Caco-2 (cell line): ENCODE measurements at regions of chr15 and their contacts with region 1.

Region 1: DNA sequence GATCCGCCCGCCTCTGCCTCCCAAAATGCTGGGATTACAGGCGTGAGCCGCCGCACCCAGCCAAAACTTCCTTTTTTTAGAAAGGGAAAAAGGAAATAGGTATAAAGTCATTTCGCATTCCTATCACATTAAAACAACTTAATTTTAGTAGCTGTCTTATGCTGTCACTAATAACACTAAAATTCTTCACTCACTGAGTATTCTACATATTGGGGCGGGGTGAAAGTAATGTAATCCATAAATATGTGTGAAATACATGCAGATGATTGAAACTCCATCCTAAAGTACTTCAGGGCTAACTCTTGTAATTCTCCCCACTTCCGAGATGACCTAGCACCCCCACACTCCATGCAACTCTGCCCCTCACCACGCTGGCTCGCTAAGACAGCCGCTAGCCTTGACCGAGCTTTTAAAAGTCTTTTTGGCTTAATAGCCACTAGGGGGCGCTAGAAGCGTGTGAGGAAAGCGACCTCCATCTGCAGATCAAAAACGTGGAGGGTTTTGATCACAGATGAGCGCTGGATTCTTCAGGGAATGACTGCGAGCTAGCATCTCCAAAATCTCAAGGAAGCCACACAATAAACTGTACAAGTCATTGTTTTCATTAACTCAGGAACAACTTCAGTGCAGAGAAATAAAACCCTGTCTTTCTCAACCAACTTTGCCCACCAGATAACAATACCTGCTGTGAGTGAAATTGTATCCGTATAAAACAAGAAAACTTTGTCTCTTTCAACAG is 129.3 kb upstream of the IGF1R start:
- DNase-seq: peak; percentile 55 to 70
- H3K4me3 ChIP-seq: no peak overlapping the region
- H3K4me3 Mint-ChIP-seq: no peak overlapping the region
- H3K27ac Mint-ChIP-seq: no peak overlapping the region
- H3K4me1 ChIP-seq: no peaks in the 10 kb centered on the region
- H3K4me1 Mint-ChIP-seq: peaks cover under 1% of the 10 kb centered on the region
- H3K27me3 ChIP-seq: no peaks in the 10 kb centered on the region
- H3K27me3 Mint-ChIP-seq: peaks cover 5% of the 10 kb centered on the region
- CTCF ChIP-seq: peak; percentile 78

Region 2: DNA sequence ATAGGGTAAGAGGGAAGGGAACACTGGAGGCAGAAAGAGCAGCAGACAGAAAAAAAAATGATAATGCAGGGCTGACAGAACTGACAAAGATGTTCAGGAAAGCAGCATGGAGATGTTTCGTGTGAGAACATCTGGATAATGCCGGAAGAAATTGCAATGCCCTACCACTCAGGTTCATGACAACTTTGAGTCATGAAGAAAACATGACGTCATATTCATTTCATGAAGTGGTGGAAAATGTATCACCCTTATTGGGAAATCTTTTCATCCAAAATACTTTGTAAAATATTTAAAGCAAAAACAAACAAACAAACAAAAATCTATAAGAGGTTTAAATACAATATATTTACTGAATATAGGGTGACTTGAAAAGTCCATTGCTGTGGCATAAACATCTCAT is 176.1 kb before region 1 on chr15:
- CTCF ChIA-PET with region 1: no interaction called
- POLR2A ChIA-PET with region 1: no interaction called
- intact Hi-C with region 1: no loop called
- DNase-seq: no peak
- H3K4me3 ChIP-seq: no peak overlapping the region
- H3K4me3 Mint-ChIP-seq: no peak overlapping the region
- H3K27ac Mint-ChIP-seq: no peak overlapping the region
- H3K4me1 ChIP-seq: no peaks in the 10 kb centered on the region
- H3K4me1 Mint-ChIP-seq: no peaks in the 10 kb centered on the region
- H3K27me3 ChIP-seq: no peaks in the 10 kb centered on the region
- H3K27me3 Mint-ChIP-seq: peaks cover 5% of the 10 kb centered on the region
- CTCF ChIP-seq: no peak

Region 3: DNA sequence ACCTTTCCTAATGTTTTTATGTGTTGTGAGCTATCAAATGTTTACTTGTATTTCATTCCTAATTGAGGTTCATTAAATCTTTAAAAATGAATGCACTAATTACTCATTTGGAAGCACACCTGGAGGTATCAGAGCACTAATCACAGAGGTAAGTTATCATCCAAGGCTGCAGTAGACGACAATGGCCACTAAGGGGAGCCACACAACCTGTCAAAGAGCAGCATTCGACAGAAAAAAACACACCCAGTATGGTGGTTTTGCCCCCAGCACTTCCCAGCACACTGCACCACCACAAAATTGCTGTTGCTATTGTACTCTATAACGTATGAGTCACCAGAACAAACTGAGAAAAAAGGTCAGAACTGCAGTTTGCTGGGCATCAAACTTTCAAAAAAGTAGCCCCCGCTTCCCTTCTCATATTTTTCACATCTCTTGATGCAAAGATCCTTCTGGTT is 76.6 kb before region 1 on chr15:
- CTCF ChIA-PET with region 1: no interaction called
- POLR2A ChIA-PET with region 1: no interaction called
- intact Hi-C with region 1: loop called (anchors 2 kb)
- DNase-seq: peak; percentile 69 to 70
- H3K4me3 ChIP-seq: no peak overlapping the region
- H3K4me3 Mint-ChIP-seq: no peak overlapping the region
- H3K27ac Mint-ChIP-seq: no peak overlapping the region
- H3K4me1 ChIP-seq: no peaks in the 10 kb centered on the region
- H3K4me1 Mint-ChIP-seq: no peaks in the 10 kb centered on the region
- H3K27me3 ChIP-seq: no peaks in the 10 kb centered on the region; the same call in 1 of the 2 replicates
- H3K27me3 Mint-ChIP-seq: peaks cover 19% of the 10 kb centered on the region
- CTCF ChIP-seq: peak; percentile 74 to 78

Region 4: DNA sequence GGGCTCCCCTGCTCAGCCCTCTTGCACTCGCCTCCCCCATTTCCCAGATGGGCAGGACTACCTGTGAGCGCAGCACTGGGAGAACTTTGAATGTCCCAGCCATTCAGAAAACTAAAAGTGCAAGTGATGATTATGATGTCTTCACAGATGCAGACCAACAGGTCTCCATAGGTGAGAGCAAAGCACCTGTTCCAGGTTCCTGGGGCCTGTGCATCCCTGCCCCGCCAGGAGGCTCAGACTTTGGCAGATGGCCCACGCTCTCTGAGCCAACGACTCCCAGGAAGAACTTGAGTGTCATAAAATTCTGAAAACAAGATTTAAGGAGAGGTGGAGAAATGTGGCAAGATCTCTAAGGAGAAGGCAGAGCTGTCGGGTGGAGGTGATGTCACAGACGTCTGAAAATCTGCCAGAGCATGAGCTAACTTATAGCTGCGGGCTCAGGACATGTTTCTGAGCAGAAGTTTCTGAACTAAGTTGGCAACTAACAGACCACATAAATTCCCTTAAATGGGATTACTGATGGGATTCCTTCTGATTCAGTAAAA is 18.6 kb after region 1 on chr15:
- CTCF ChIA-PET with region 1: no interaction called
- POLR2A ChIA-PET with region 1: no interaction called
- intact Hi-C with region 1: no loop called
- DNase-seq: no peak
- H3K4me3 ChIP-seq: no peak overlapping the region
- H3K4me3 Mint-ChIP-seq: no peak overlapping the region
- H3K27ac Mint-ChIP-seq: no peak overlapping the region
- H3K4me1 ChIP-seq: no peaks in the 10 kb centered on the region
- H3K4me1 Mint-ChIP-seq: no peaks in the 10 kb centered on the region
- H3K27me3 ChIP-seq: no peaks in the 10 kb centered on the region; the same call in none of the 2 replicates
- H3K27me3 Mint-ChIP-seq: peaks cover 34% of the 10 kb centered on the region
- CTCF ChIP-seq: no peak

Region 5: GRCh38 chr15:98568382-98569017 is 49.5 kb after region 1 on chr15:
- CTCF ChIA-PET with region 1: no interaction called
- POLR2A ChIA-PET with region 1: no interaction called
- intact Hi-C with region 1: loop called (anchors 5 kb)
- DNase-seq: no peak
- H3K4me3 ChIP-seq: no peak overlapping the region
- H3K4me3 Mint-ChIP-seq: no peak overlapping the region
- H3K27ac Mint-ChIP-seq: no peak overlapping the region
- H3K4me1 ChIP-seq: no peaks in the 10 kb centered on the region
- H3K4me1 Mint-ChIP-seq: no peaks in the 10 kb centered on the region
- H3K27me3 ChIP-seq: no peaks in the 10 kb centered on the region
- H3K27me3 Mint-ChIP-seq: peaks cover 16% of the 10 kb centered on the region
- CTCF ChIP-seq: peak; percentile 50 to 80

Region 6: GRCh38 chr15:98635848-98636247 is 116.9 kb after region 1 on chr15:
- CTCF ChIA-PET with region 1: no interaction called
- POLR2A ChIA-PET with region 1: no interaction called
- intact Hi-C with region 1: no loop called
- DNase-seq: no peak
- H3K4me3 ChIP-seq: no peak overlapping the region
- H3K4me3 Mint-ChIP-seq: no peak overlapping the region
- H3K27ac Mint-ChIP-seq: no peak overlapping the region
- H3K4me1 ChIP-seq: no peaks in the 10 kb centered on the region
- H3K4me1 Mint-ChIP-seq: no peaks in the 10 kb centered on the region
- H3K27me3 ChIP-seq: no peaks in the 10 kb centered on the region
- H3K27me3 Mint-ChIP-seq: peaks cover 20% of the 10 kb centered on the region
- CTCF ChIP-seq: no peak

Region 7: DNA sequence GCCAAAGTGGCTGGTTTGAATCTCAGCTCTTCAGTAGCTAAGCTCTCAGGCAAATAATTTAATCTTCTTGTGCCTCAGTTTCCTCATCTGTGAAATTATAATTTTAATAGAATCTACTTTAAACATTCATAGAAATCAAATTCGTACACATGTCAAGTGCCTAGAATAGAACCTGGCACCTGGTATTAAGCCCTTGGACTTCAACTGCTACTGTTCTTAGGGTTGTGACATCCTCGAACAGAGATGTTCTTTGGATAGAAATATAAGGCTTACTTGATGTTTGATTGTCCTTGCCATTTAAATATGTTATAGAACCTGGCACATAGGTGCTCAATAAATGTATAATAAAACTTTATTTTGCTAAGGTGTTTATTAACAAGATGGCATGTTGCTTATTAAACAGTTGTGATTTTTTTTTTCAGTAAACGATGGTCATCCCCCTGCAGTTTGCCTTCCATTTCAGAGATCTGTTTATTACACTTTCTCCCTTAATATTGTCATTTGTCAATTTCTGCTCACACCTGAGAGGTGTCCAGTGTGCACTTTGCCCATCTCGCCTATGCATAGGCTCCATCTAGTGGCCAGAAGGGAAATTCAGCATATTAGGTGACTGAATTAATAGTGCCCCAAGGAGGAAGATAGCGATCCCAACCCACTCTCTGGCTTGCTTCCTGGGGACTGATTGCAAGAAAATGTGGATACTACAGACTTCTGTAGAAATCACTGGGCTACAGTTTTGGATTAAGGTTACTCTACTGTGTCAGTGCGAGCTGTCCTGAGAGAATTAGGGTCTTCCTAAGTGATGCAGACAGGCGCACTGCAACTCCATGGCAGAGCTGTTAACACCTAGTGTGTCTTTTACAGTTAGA is 140.1 kb after region 1 on chr15:
- CTCF ChIA-PET with region 1: interaction called, 3 read pairs
- POLR2A ChIA-PET with region 1: no interaction called
- intact Hi-C with region 1: loop called (anchors 1 kb)
- DNase-seq: peak in 1 of 2 experiments; percentile 63
- H3K4me3 ChIP-seq: no peak overlapping the region
- H3K4me3 Mint-ChIP-seq: no peak overlapping the region
- H3K27ac Mint-ChIP-seq: no peak overlapping the region
- H3K4me1 ChIP-seq: peaks cover 12% of the 10 kb centered on the region; the same call in 1 of the 2 replicates
- H3K4me1 Mint-ChIP-seq: peaks cover 20% of the 10 kb centered on the region
- H3K27me3 ChIP-seq: no peaks in the 10 kb centered on the region
- H3K27me3 Mint-ChIP-seq: no peaks in the 10 kb centered on the region
- CTCF ChIP-seq: peak; percentile 79 to 81

Region 8: GRCh38 chr15:98779463-98780071 is 260.6 kb after region 1 on chr15:
- CTCF ChIA-PET with region 1: no interaction called
- POLR2A ChIA-PET with region 1: no interaction called
- intact Hi-C with region 1: loop called (anchors 5 kb)
- DNase-seq: peak; percentile 75 to 84
- H3K4me3 ChIP-seq: no peak overlapping the region
- H3K4me3 Mint-ChIP-seq: no peak overlapping the region
- H3K27ac Mint-ChIP-seq: peak overlapping the region; percentile 58
- H3K4me1 ChIP-seq: no peaks in the 10 kb centered on the region; the same call in none of the 2 replicates
- H3K4me1 Mint-ChIP-seq: peaks cover 16% of the 10 kb centered on the region
- H3K27me3 ChIP-seq: no peaks in the 10 kb centered on the region
- H3K27me3 Mint-ChIP-seq: no peaks in the 10 kb centered on the region
- CTCF ChIP-seq: peak; percentile 81 to 87

Region 9: DNA sequence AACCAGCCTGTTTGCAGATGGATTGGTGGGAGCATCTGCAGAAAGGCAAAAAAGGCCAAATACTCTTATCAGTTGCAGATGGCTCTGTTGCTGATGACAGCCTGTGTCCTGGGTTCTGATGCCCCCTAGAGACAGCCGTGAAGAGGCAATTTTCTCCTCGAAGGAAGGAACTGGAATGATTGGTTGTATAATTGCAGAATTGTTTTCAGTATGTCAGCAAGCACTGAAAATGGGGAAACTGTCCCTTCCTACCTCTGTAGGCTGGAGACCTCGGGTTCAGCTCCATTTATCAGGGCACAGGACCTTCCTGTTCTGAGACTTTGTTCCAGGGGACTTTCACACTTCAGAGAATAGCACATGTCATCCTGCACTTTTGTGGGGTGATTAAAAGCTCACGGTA is 385.6 kb after region 1 on chr15:
- CTCF ChIA-PET with region 1: no interaction called
- POLR2A ChIA-PET with region 1: no interaction called
- intact Hi-C with region 1: loop called (anchors 1 kb)
- DNase-seq: peak; percentile 57 to 70
- H3K4me3 ChIP-seq: no peak overlapping the region
- H3K4me3 Mint-ChIP-seq: no peak overlapping the region
- H3K27ac Mint-ChIP-seq: no peak overlapping the region
- H3K4me1 ChIP-seq: peaks cover 60% of the 10 kb centered on the region
- H3K4me1 Mint-ChIP-seq: peaks cover 27% of the 10 kb centered on the region
- H3K27me3 ChIP-seq: no peaks in the 10 kb centered on the region
- H3K27me3 Mint-ChIP-seq: no peaks in the 10 kb centered on the region
- CTCF ChIP-seq: peak; percentile 52 to 77

Region 10: DNA sequence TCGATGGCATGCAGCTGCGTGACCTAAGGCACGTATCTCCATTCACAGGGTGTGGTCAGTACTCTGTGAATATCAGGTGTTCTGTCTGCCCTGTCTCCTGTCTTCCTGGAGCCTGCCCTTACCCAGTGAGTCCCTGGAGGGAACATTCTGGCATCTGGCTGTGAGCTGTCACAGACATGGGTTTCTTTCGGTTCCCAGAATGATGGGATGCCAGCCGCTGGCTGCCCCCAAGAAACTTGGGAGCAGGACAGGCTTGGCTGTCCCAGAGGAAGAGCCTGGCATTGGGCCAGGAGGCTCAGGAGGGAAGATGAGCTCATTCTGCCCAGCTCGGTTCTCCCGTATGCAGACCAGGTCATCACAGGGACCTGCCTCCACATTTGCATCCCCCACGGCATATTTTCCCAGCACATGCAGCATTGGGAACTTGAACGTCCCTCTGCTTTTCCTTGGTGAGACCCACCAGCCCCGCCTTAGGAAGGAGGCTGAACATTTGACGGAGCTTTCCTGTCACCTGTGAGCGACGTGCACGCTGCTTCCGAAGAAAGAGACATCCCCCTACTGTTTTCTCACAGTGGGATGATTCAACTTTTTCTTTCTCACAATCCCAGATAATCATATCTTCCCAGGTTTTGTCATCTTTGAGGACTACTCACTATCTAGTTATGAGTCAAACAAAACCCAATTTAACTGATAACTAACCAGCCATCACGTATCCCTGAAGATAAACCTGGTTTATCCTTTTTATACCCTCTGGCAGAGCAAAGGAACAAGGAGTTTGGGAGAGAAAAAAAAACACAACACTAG is 510.6 kb after region 1 on chr15:
- CTCF ChIA-PET with region 1: no interaction called
- POLR2A ChIA-PET with region 1: no interaction called
- intact Hi-C with region 1: no loop called
- DNase-seq: no peak
- H3K4me3 ChIP-seq: no peak overlapping the region
- H3K4me3 Mint-ChIP-seq: peak overlapping the region; percentile 50
- H3K27ac Mint-ChIP-seq: no peak overlapping the region
- H3K4me1 ChIP-seq: 0 out of 2 replicates have a peak, but pooled peaks cover 5% of the 10 kb centered on the region
- H3K4me1 Mint-ChIP-seq: peaks cover 5% of the 10 kb centered on the region
- H3K27me3 ChIP-seq: no peaks in the 10 kb centered on the region
- H3K27me3 Mint-ChIP-seq: peaks cover 8% of the 10 kb centered on the region
- CTCF ChIP-seq: no peak

Region 11: DNA sequence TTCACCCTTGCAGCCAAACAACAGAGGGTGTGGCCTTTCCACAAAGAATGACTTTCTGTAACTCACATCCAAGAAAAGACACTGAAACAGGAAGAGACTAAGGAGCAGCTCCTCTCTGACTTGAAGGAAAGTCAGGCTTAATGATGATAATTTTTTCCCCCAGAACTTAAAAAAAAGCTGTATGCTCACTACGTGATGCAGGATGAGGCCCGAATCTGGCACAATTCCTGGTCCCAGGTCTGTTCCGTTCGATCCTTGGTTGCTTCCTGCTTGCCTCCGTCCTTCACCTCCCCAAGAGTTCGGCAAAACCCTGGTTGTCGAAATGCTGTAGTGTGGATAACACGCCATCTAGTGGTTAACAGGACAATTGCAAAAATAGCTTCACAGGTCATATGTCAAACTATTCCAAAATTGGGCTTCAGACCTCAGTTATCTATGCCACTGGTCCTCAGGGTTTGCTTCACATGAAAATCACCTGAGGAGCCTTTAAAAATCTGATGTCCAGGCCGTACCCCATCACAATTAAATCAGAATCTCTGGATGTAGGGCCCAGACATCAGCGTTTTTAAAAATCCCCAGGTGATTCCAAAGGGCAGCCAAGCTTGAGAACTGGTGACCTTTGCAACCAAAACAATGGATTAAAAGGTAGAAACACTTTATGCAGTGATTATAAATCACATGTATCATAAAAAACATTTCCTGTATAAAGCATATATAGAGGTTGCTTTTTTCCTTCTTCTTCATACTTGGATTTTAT is 557.7 kb after region 1 on chr15:
- CTCF ChIA-PET with region 1: interaction called, 8 read pairs
- POLR2A ChIA-PET with region 1: no interaction called
- intact Hi-C with region 1: loop called (anchors 1 kb)
- DNase-seq: peak; percentile 63 to 69
- H3K4me3 ChIP-seq: peak overlapping the region; percentile 19
- H3K4me3 Mint-ChIP-seq: peak overlapping the region; percentile 69
- H3K27ac Mint-ChIP-seq: no peak overlapping the region
- H3K4me1 ChIP-seq: no peaks in the 10 kb centered on the region
- H3K4me1 Mint-ChIP-seq: peaks cover 7% of the 10 kb centered on the region
- H3K27me3 ChIP-seq: no peaks in the 10 kb centered on the region
- H3K27me3 Mint-ChIP-seq: peaks cover 5% of the 10 kb centered on the region
- CTCF ChIP-seq: peak; percentile 76 to 77